ENCODE measurements at regions of chr16 and their contacts with region 1.

Region 1: GRCh38 chr16:14070877-14071575 is at the start of gene MRTFB:
- DNase-seq: peak; percentile 83
- H3K4me3 ChIP-seq: peak within 1 kb of the TSS; percentile 91 to 96 (median 94)
- H3K27ac ChIP-seq: peak within 1 kb of the TSS; percentile 78 to 84 (median 82)
- H3K4me1 ChIP-seq: peaks cover 0 to 22% (median 13%) of the 10 kb centered on the region in 4 donors
- H3K27me3 ChIP-seq: no peaks in the 10 kb centered on the region
- CTCF ChIP-seq: no peak
- EP300 ChIP-seq: no peak
- POLR2A ChIP-seq: no peak
- total RNA-seq, gene MRTFB: 23.2 to 44.6 (median 29.3) TPM

Region 2: GRCh38 chr16:14186007-14186794 is 115.2 kb after region 1 on chr16:
- intact Hi-C with region 1: loop called (anchors 5 kb)
- DNase-seq: no peak
- H3K4me3 ChIP-seq: peak overlapping the region; percentile 4 to 38 (median 29)
- H3K27ac ChIP-seq: peak overlapping the region; percentile 62 to 74 (median 68)
- H3K4me1 ChIP-seq: peaks cover 0 to 53% (median 23%) of the 10 kb centered on the region in 4 donors
- H3K27me3 ChIP-seq: no peaks in the 10 kb centered on the region
- CTCF ChIP-seq: peak; percentile 17 to 47 (median 30)
- EP300 ChIP-seq: no peak
- POLR2A ChIP-seq: no peak

Measured in sigmoid colon (tissue), 7 donors.